ENCODE measurements at regions of chr1 and their contacts with region 1.

Region 1: DNA sequence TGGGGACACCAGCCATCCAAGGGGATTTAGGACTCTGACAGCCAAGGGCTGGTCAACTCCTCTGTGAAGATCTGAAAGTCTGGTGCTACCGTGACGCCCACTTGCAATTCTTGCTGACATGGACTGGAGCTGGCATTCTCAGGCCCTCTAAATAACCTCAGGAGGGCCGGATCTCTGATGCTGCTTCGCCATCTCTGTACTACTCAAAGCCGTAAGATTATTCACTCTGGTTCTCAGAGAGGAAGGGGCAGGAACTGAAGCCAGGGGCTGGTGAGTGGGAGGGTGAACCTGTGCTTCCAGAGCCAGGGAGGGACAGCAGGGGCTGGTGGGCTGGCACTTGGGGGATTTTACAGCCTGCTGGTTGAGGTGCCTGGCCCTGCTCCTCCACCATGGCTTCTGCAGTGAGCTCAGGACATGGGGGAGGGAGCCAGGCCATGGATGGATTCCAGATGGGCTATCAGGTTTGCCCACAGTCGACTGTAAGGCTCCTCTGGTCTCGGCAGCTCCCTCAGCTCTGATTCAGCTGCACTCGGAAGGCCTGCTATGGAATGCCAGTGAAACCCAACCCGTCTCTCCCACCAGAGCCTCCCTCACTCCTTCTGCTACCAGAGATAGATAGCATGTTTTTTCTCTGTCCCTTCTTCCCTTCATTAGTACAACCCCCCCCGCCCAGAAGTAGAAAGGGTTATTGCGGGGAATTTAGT is 84.5 kb downstream of the PLXNA2 start:
- DNase-seq: no peak
- H3K4me3 ChIP-seq: no peak overlapping the region
- H3K27ac ChIP-seq: peak overlapping the region; percentile 48 to 67 (median 60)
- H3K4me1 ChIP-seq: peaks cover 32 to 89% (median 61%) of the 10 kb centered on the region in 4 donors
- H3K27me3 ChIP-seq: no peaks in the 10 kb centered on the region
- CTCF ChIP-seq: no peak
- EP300 ChIP-seq: no peak
- POLR2A ChIP-seq: no peak

Region 2: GRCh38 chr1:207925210-207925609 is 234.5 kb before region 1 on chr1:
- in situ Hi-C with region 1: no loop called
- intact Hi-C with region 1: no loop called
- DNase-seq: no peak
- H3K4me3 ChIP-seq: no peak overlapping the region
- H3K27ac ChIP-seq: peak overlapping the region in 3 of 4 donors; percentile 3 to 30 (median 26)
- H3K4me1 ChIP-seq: peaks cover 0 to 7% (median 0%) of the 10 kb centered on the region in 4 donors
- H3K27me3 ChIP-seq: no peaks in the 10 kb centered on the region
- CTCF ChIP-seq: no peak
- EP300 ChIP-seq: no peak
- POLR2A ChIP-seq: no peak

Region 3: GRCh38 chr1:208238710-208239472 is 79.2 kb after region 1 on chr1:
- in situ Hi-C with region 1: no loop called
- intact Hi-C with region 1: loop called (anchors 10 kb)
- DNase-seq: no peak
- H3K4me3 ChIP-seq: peak overlapping the region in 1 of 4 donors; percentile 26
- H3K27ac ChIP-seq: peak overlapping the region; percentile 91 to 92 (median 91)
- H3K4me1 ChIP-seq: peaks cover 12 to 88% (median 79%) of the 10 kb centered on the region in 4 donors
- H3K27me3 ChIP-seq: no peaks in the 10 kb centered on the region
- CTCF ChIP-seq: peak; percentile 67 to 77 (median 75)
- EP300 ChIP-seq: no peak
- POLR2A ChIP-seq: no peak